ENCODE measurements at regions of chr12 and their contacts with region 1.

Region 1: DNA sequence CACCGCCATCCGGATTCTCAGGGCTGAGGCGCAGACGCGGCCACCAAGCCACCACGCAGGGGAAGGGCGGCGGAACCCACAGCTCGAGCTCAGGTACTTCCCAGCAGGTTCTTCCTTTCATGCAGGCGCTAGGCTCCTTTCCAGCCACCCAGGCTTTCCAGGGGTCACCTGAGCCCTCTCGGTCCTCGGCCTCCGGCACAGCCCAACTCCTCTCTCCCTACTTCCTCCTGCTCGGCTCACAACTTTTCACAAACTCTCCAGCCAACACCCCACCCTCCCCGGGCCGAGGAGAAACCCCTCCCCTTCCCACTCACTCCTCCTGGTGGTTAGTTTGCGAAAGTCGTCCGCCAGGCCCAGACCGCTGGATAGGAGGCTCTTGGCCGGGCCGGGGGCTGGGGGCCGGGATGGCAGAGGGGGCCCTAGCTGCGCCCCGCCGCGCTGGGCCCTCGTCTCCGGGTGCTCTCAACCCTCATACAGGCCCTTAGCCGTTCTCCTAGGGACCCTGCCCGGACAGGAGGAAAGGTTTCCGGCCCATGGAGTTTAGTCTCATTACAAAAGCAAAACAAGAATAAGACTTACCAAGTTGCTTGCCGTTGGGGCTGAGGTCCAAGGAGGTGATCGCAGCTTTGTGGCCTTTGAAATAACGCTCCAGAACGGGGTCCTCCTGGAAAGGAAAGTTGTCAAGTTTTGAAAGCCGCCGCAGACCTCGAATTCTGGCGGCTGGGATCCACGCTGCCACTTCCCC is at the start of gene GALNT4:
- DNase-seq: peak; percentile 88 to 90 (median 89)
- ATAC-seq: peak; percentile 83 to 95 (median 93)
- H3K4me3 ChIP-seq: peak within 1 kb of the TSS; percentile 68 to 97 (median 92)
- H3K27ac ChIP-seq: peak within 1 kb of the TSS; percentile 74 to 95 (median 90)
- H3K4me1 ChIP-seq: peaks cover 6 to 53% (median 35%) of the 10 kb centered on the region in 12 donors
- H3K27me3 ChIP-seq: no peaks in the 10 kb centered on the region
- CTCF ChIP-seq: peak; percentile 56 to 81 (median 67)
- POLR2A ChIP-seq: peak in 1 of 2 donors; percentile 62
- total RNA-seq, gene GALNT4: 1.9 to 5.4 (median 2.5) TPM

Region 2: GRCh38 chr12:88793096-88793495 is 731.6 kb before region 1 on chr12:
- intact Hi-C with region 1: no loop called
- DNase-seq: no peak
- ATAC-seq: no peak
- H3K4me3 ChIP-seq: no peak overlapping the region
- H3K27ac ChIP-seq: no peak overlapping the region
- H3K4me1 ChIP-seq: no peaks in the 10 kb centered on the region
- H3K27me3 ChIP-seq: no peaks in the 10 kb centered on the region
- CTCF ChIP-seq: no peak
- POLR2A ChIP-seq: no peak

Region 3: DNA sequence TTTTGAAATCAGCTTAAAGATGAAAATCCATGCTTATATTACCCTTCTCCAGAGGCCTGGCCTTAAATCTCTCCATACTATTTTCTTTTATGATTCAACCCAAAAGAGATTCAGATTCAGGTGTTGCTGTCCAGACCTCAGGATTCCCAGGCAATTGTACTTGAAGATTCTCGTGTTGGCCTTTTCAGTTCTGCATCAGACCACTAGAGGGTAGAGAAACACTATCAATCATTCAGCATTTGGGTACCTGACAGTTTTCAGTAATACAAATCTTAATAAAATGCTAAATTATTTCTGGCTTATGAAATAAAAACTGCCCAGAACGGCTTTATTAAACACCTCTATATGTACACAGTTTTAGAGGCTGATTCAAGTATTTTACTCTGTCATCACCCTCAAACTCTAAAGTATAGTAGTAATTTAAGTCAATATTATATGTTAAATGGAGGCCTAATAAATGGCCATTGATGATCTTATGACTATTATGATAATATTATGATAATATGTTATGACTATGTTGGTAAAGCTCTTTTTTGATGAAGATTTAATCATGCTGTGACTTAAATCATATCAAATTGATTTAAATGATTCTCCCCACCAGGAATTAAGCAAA is 473.5 kb before region 1 on chr12:
- intact Hi-C with region 1: loop called in 2 of 10 experiments (anchors 10 kb)
- DNase-seq: peak in 2 of 5 donors; percentile 15 to 22
- ATAC-seq: peak in 3 of 4 donors; percentile 68 to 76 (median 70)
- H3K4me3 ChIP-seq: no peak overlapping the region
- H3K27ac ChIP-seq: no peak overlapping the region
- H3K4me1 ChIP-seq: peaks cover 0 to 12% (median 0%) of the 10 kb centered on the region in 12 donors
- H3K27me3 ChIP-seq: no peaks in the 10 kb centered on the region
- CTCF ChIP-seq: peak; percentile 86 to 97 (median 94)
- POLR2A ChIP-seq: no peak

Region 4: GRCh38 chr12:89345830-89346740 is 178.6 kb before region 1 on chr12:
- intact Hi-C with region 1: loop called in 6 of 10 experiments (anchors 2 to 10 kb)
- DNase-seq: peak; percentile 70 to 80 (median 72)
- ATAC-seq: peak; percentile 67 to 84 (median 80)
- H3K4me3 ChIP-seq: peak overlapping the region in 9 of 12 donors; percentile 76 to 95 (median 87)
- H3K27ac ChIP-seq: peak overlapping the region; percentile 17 to 99 (median 72)
- H3K4me1 ChIP-seq: peaks cover 3 to 66% (median 40%) of the 10 kb centered on the region in 12 donors
- H3K27me3 ChIP-seq: no peaks in the 10 kb centered on the region
- CTCF ChIP-seq: no peak
- POLR2A ChIP-seq: no peak

Region 5: GRCh38 chr12:89363084-89363483 is 161.6 kb before region 1 on chr12:
- intact Hi-C with region 1: loop called in 5 of 10 experiments (anchors 10 kb)
- DNase-seq: no peak
- ATAC-seq: peak in 3 of 4 donors; percentile 34 to 64 (median 62)
- H3K4me3 ChIP-seq: no peak overlapping the region
- H3K27ac ChIP-seq: peak overlapping the region in 8 of 12 donors; percentile 10 to 57 (median 32)
- H3K4me1 ChIP-seq: peaks cover 0 to 21% (median 9%) of the 10 kb centered on the region in 12 donors
- H3K27me3 ChIP-seq: no peaks in the 10 kb centered on the region
- CTCF ChIP-seq: no peak
- POLR2A ChIP-seq: no peak

Region 6: DNA sequence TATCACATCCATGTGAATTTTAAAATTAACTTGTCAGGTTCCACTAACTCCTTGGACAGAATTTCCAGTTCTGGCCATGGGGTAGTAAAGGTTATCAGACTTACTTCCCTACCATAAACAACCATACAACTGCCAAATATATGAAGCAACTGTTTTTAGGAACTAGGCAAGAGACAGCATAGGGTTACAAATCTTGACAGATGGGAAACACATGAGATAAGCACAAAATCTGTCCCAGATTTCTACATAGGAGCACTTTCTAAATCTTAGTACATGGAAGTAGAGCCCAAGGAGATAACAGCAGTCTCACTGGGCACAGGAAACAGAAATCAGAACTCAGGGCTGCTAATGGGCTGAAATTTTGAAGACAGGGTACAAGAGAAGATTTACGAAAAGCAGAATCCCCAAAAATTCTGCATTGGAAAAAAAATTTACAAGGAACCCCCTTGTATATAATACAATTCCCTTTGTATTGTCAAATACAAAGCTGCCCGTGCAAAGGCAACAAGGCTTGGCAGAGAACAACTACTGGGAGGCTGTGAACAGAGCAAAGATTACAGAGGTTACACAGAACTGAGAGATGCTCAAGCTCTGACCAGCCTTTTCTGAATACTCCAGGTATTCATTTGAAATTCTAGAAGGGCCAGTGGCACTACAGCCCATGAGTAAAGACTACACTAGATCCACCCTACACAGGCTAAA is 43.3 kb before region 1 on chr12:
- intact Hi-C with region 1: loop called in 2 of 10 experiments (anchors 5 kb)
- DNase-seq: no peak
- ATAC-seq: peak in 1 of 4 donors; percentile 11
- H3K4me3 ChIP-seq: no peak overlapping the region
- H3K27ac ChIP-seq: no peak overlapping the region
- H3K4me1 ChIP-seq: peaks cover 0 to 17% (median 0%) of the 10 kb centered on the region in 12 donors
- H3K27me3 ChIP-seq: no peaks in the 10 kb centered on the region
- CTCF ChIP-seq: no peak
- POLR2A ChIP-seq: no peak

Region 7: GRCh38 chr12:89800435-89800834 is 275.7 kb after region 1 on chr12:
- intact Hi-C with region 1: no loop called
- DNase-seq: no peak
- ATAC-seq: no peak
- H3K4me3 ChIP-seq: no peak overlapping the region
- H3K27ac ChIP-seq: no peak overlapping the region
- H3K4me1 ChIP-seq: no peaks in the 10 kb centered on the region
- H3K27me3 ChIP-seq: peaks cover 0 to 11% (median 0%) of the 10 kb centered on the region in 9 donors
- CTCF ChIP-seq: no peak
- POLR2A ChIP-seq: no peak

Region 8: DNA sequence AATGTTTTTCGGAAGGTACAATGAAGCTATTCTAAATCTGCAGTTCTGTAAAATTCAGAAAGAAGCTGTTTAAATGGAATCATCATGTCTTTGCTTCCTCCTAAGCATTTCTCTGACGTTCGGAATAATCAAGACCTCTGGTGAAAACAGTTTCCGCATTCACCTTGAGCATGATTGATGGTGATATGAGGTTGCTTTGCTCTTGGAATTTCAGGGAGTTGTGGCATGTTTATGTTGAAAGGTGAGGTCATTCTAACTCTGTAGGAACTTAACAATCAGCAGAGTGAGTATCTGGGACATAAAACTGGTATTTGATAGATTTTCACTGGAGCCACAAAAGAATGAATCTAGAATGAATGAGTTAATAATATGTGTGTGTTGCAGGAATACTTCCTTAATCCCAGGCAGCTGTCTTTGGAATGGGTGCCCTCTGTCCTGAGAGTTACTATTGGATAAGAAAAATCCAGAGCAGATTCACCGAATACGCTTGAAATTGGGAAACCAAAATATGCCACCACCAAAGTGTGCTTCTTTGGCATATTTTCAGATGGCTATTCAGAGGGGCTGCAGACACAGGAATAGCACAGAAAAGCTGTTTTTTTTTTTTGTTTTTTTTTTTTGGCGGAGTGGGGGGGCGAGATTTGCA is 831.1 kb after region 1 on chr12:
- intact Hi-C with region 1: no loop called
- DNase-seq: no peak
- ATAC-seq: no peak
- H3K4me3 ChIP-seq: no peak overlapping the region
- H3K27ac ChIP-seq: no peak overlapping the region
- H3K4me1 ChIP-seq: no peaks in the 10 kb centered on the region
- H3K27me3 ChIP-seq: no peaks in the 10 kb centered on the region
- CTCF ChIP-seq: no peak
- POLR2A ChIP-seq: no peak